HepG2 (cell line): ENCODE measurements at regions of chr12 and their contacts with region 1.

Region 1: GRCh38 chr12:12562585-12563261 is at the start of gene DUSP16:
- DNase-seq: peak; percentile 96
- ATAC-seq: peak; percentile 95
- H3K4me3 ChIP-seq: peak within 1 kb of the TSS; percentile 79 to 90 (median 87)
- H3K27ac ChIP-seq: peak within 1 kb of the TSS; percentile 93
- H3K4me1 ChIP-seq: peaks cover 29% of the 10 kb centered on the region
- H3K27me3 ChIP-seq: no peaks in the 10 kb centered on the region; a peak in 1 of 5 replicates
- CTCF ChIP-seq: peak; percentile 47
- EP300 ChIP-seq: no peak
- POLR2A ChIP-seq: peak; percentile 64 to 68
- RAD21 ChIP-seq: peak; percentile 52
- total RNA-seq, gene DUSP16: 46.6 and 69.1 TPM in 2 replicates

Region 2: GRCh38 chr12:12546314-12546772 is 16.4 kb before region 1 on chr12:
- CTCF ChIA-PET with region 1: no interaction called
- POLR2A ChIA-PET with region 1: interaction called, 8 read pairs
- in situ Hi-C with region 1: no loop called
- intact Hi-C with region 1: loop called (anchors 2 kb)
- DNase-seq: peak; percentile 99
- ATAC-seq: peak; percentile 94
- H3K4me3 ChIP-seq: no peak overlapping the region; a peak in 1 of 6 replicates
- H3K27ac ChIP-seq: peak overlapping the region; percentile 69
- H3K4me1 ChIP-seq: peaks cover 79% of the 10 kb centered on the region
- H3K27me3 ChIP-seq: no peaks in the 10 kb centered on the region
- CTCF ChIP-seq: no peak
- EP300 ChIP-seq: peak; percentile 42 to 97; a peak in 3 of 4 replicates
- POLR2A ChIP-seq: no peak
- RAD21 ChIP-seq: no peak

Region 3: GRCh38 chr12:12611512-12612306 is 49.0 kb after region 1 on chr12 and contains the start of gene CREBL2:
- CTCF ChIA-PET with region 1: no interaction called
- POLR2A ChIA-PET with region 1: interaction called, 11 read pairs
- in situ Hi-C with region 1: no loop called
- intact Hi-C with region 1: loop called (anchors 5 kb)
- DNase-seq: peak; percentile 95
- ATAC-seq: peak; percentile 94
- H3K4me3 ChIP-seq: peak within 1 kb of the TSS; percentile 66 to 96 (median 71)
- H3K27ac ChIP-seq: peak within 1 kb of the TSS; percentile 88
- H3K4me1 ChIP-seq: peaks cover 58% of the 10 kb centered on the region
- H3K27me3 ChIP-seq: no peaks in the 10 kb centered on the region
- CTCF ChIP-seq: peak; percentile 41
- EP300 ChIP-seq: peak; percentile 12 to 53; a peak in 1 of 4 replicates
- POLR2A ChIP-seq: peak; percentile 60 to 82
- RAD21 ChIP-seq: no peak
- total RNA-seq, gene CREBL2: 6.9 and 10.1 TPM in 2 replicates

Region 4: GRCh38 chr12:12661086-12661485 is 98.4 kb after region 1 on chr12:
- CTCF ChIA-PET with region 1: no interaction called
- POLR2A ChIA-PET with region 1: no interaction called
- in situ Hi-C with region 1: no loop called
- intact Hi-C with region 1: loop called (anchors 1 kb)
- DNase-seq: no peak
- ATAC-seq: no peak
- H3K4me3 ChIP-seq: no peak overlapping the region
- H3K27ac ChIP-seq: no peak overlapping the region
- H3K4me1 ChIP-seq: no peaks in the 10 kb centered on the region
- H3K27me3 ChIP-seq: no peaks in the 10 kb centered on the region
- CTCF ChIP-seq: no peak
- EP300 ChIP-seq: no peak
- POLR2A ChIP-seq: no peak
- RAD21 ChIP-seq: no peak

Region 5: GRCh38 chr12:12704593-12705230 is 142.0 kb after region 1 on chr12:
- CTCF ChIA-PET with region 1: no interaction called
- POLR2A ChIA-PET with region 1: no interaction called
- in situ Hi-C with region 1: no loop called
- intact Hi-C with region 1: loop called (anchors 5 kb)
- DNase-seq: peak; percentile 92
- ATAC-seq: peak; percentile 99
- H3K4me3 ChIP-seq: peak overlapping the region in 1 of 3 experiments; percentile 6; a peak in 1 of 6 replicates
- H3K27ac ChIP-seq: no peak overlapping the region
- H3K4me1 ChIP-seq: peaks cover 25% of the 10 kb centered on the region
- H3K27me3 ChIP-seq: no peaks in the 10 kb centered on the region; a peak in 1 of 5 replicates
- CTCF ChIP-seq: peak; percentile 92
- EP300 ChIP-seq: no peak; a peak in 1 of 4 replicates
- POLR2A ChIP-seq: no peak
- RAD21 ChIP-seq: peak; percentile 98

Region 6: GRCh38 chr12:12716793-12717585 is 154.3 kb after region 1 on chr12 and contains the start of gene CDKN1B:
- CTCF ChIA-PET with region 1: no interaction called
- POLR2A ChIA-PET with region 1: no interaction called
- in situ Hi-C with region 1: no loop called
- intact Hi-C with region 1: loop called (anchors 5 kb)
- DNase-seq: peak; percentile 86
- ATAC-seq: peak; percentile 86
- H3K4me3 ChIP-seq: peak within 1 kb of the TSS; percentile 92 to 96 (median 96)
- H3K27ac ChIP-seq: peak within 1 kb of the TSS; percentile 99
- H3K4me1 ChIP-seq: peaks cover 47% of the 10 kb centered on the region
- H3K27me3 ChIP-seq: no peaks in the 10 kb centered on the region; a peak in 2 of 5 replicates
- CTCF ChIP-seq: no peak
- EP300 ChIP-seq: peak in 1 of 2 experiments; percentile 26; a peak in 1 of 4 replicates
- POLR2A ChIP-seq: peak; percentile 55 to 78
- RAD21 ChIP-seq: no peak
- total RNA-seq, gene CDKN1B: 37.2 and 39.6 TPM in 2 replicates

Region 7: GRCh38 chr12:12786716-12787601 is 224.2 kb after region 1 on chr12:
- CTCF ChIA-PET with region 1: no interaction called
- POLR2A ChIA-PET with region 1: no interaction called
- in situ Hi-C with region 1: no loop called
- intact Hi-C with region 1: no loop called
- DNase-seq: peak; percentile 32
- ATAC-seq: peak; percentile 92
- H3K4me3 ChIP-seq: peak overlapping the region in 2 of 3 experiments; percentile 18 to 51; a peak in 2 of 6 replicates
- H3K27ac ChIP-seq: no peak overlapping the region
- H3K4me1 ChIP-seq: peaks cover 37% of the 10 kb centered on the region
- H3K27me3 ChIP-seq: peaks cover 0 to 40% of the 10 kb centered on the region in 2 experiments; a peak in 4 of 5 replicates
- CTCF ChIP-seq: no peak
- EP300 ChIP-seq: no peak
- POLR2A ChIP-seq: peak in 1 of 2 experiments; percentile 50; a peak in 2 of 4 replicates
- RAD21 ChIP-seq: no peak